Posterior cingulate gyrus (tissue), 11 donors: ENCODE measurements at regions of chr10 and their contacts with region 1.

Region 1: DNA sequence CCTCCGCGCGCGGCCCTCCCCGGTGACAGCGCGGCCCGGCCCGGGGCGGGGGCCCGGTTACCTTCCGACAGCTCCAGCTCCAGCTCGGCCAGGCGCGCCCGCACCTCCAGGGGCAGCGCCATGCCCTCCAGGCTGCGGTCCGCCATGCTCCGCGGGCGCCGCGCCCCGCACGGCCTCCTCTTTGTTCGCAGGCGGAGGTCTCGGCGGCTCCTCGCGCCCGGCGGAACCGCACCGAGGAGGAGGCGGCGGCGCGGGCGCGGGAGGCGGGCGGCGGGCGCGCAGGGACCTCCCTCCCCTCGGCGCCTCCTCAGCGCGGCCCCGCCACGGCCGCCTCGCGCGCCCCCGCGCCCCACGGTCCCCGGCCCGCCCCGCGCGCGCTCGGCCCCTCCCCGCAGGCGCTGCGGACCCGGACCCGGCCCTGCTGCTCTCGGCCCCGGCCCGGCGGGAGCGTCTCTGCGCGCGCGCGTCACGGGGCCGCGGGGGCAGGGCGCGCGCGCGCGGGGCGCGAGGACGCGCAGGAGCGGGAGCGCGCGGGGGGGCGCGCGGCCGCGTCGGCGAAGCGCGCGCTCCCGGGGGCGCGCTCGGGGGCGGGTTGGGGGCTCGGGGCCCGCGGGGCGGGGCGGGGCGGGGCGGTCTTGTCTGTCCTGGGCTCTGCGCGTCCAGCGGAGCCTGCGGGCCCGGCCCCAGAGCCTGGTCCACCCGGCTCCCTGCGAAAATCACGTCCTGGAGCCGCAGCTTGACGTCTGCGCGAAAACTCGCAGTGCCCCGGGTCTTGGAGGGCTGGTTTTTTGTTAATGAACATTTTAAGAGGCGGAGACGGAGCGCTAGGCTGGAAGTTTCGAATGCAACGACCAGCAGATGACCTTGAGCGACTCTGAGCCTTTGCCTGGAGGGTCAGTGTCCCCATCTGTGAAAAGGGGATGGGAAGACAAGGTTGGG is at the start of gene DIP2C:
- DNase-seq: peak in 8 of 10 donors; percentile 47 to 96 (median 64)

Region 2: GRCh38 chr10:511101-511848 is 178.4 kb before region 1 on chr10:
- intact Hi-C with region 1: loop called (anchors 5 kb)
- DNase-seq: peak; percentile 90 to 99 (median 95)

Region 3: GRCh38 chr10:633279-634245 is 56.1 kb before region 1 on chr10:
- intact Hi-C with region 1: loop called (anchors 10 kb)
- DNase-seq: peak in 4 of 10 donors; percentile 23 to 88 (median 68)

Region 4: DNA sequence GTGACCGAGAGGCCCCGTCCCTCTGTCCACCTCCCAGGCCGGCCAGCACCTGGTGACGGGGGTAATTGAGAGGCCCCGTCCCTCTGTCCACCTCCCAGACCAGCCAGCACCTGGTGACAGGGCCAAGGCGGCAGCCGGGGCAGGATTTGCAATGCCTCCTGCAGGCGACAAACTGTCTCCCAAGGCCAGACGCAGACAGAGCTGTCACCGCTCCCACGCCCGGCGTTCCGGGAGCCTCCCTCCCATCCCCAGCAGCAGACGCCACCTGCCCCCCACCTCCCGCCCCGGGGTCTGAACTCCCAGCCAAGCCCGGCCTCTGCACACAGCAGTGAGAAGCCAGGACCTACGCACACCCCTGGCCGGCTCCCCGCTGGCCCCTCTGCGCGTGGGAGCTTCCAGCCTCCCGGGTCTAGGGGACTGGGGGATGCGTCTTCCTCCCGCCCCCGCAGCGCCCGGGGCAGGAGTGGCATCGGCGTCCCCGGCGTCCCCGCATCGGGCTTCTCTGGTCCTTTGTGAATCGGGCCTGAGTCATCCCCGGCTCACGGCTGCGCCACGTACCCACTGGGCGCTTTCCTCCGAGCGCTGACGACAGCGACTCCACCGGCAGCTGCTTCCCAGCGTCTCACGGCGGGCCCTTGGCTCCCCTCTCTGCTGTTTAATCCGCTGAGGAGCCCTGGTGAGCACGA is 94.8 kb after region 1 on chr10:
- intact Hi-C with region 1: loop called (anchors 10 kb)
- DNase-seq: peak; percentile 45 to 97 (median 82)

Region 5: DNA sequence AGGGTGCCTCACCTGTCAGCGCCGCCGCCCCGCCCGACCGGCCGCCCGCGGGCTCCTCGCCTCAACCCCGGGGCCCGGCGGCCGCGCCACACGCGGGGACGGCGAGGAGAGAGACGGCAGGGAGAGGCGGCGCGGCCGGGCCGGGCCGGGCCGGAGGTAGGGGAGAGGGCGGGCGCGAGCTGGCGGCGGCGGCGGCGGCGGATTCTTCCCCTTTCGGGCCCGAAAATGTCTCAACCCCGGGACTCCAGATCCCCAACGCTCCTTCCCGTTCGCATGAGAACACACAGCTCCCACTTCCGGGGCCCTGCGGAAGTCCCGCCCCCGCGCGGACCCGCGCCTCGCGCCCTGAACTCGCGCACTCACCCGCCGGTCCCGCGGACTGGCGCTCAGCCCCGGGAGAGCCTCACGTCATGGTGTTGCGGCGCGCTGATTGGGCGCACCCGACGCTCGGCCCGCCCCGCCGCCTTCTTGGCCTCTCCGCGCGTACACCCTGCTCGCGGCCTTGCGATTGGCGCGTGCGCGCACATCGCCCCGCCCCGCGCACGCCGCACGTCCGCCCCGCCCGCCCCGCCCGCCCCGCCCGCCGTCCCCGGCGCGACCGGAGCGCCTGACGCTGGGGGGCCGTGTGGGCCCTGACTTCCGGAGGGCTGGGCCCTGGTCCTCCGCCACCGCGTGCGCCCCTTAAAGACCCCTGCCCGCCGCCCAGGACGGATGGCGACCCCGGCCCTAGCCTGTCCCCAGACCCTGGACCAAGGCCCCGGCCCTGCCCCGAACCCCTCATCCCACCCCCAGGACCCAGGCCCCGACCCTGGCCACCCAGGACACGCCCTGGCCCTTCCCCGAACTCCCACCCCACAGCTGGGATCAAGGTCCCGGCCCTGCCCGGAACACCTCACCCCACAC is 242.0 kb after region 1 on chr10 and contains the start of gene LARP4B:
- intact Hi-C with region 1: loop called (anchors 5 kb)
- DNase-seq: peak; percentile 94 to 100 (median 97)